Activated CD4-positive, alpha-beta T cell treated with anti-CD3 and anti-CD28 coated beads, Interleukin-2, amount 10 ng/mL, durations not matched to agents 7 days and 5 days (primary cell): ENCODE measurements at regions of chr10 and their contacts with region 1.

Region 1: GRCh38 chr10:114458955-114459354 is 54.7 kb upstream of the AFAP1L2 start:
- DNase-seq: no peak
- H3K4me3 Mint-ChIP-seq: no peak overlapping the region
- H3K27ac Mint-ChIP-seq: peak overlapping the region; percentile 42
- H3K4me1 Mint-ChIP-seq: peaks cover 5% of the 10 kb centered on the region
- H3K27me3 Mint-ChIP-seq: no peaks in the 10 kb centered on the region

Region 2: GRCh38 chr10:114304017-114304570 is 154.9 kb before region 1 on chr10:
- CTCF ChIA-PET with region 1: interaction called, 10 read pairs
- POLR2A ChIA-PET with region 1: no interaction called
- DNase-seq: peak; percentile 78
- H3K4me3 Mint-ChIP-seq: peak overlapping the region; percentile 77
- H3K27ac Mint-ChIP-seq: peak overlapping the region; percentile 70
- H3K4me1 Mint-ChIP-seq: peaks cover 12% of the 10 kb centered on the region
- H3K27me3 Mint-ChIP-seq: peaks cover 5% of the 10 kb centered on the region

Region 3: GRCh38 chr10:114470956-114471905 is 12.3 kb after region 1 on chr10:
- CTCF ChIA-PET with region 1: interaction called, 10 read pairs
- POLR2A ChIA-PET with region 1: no interaction called
- DNase-seq: peak; percentile 75
- H3K4me3 Mint-ChIP-seq: no peak overlapping the region
- H3K27ac Mint-ChIP-seq: peak overlapping the region; percentile 10
- H3K4me1 Mint-ChIP-seq: peaks cover 41% of the 10 kb centered on the region
- H3K27me3 Mint-ChIP-seq: no peaks in the 10 kb centered on the region

Region 4: DNA sequence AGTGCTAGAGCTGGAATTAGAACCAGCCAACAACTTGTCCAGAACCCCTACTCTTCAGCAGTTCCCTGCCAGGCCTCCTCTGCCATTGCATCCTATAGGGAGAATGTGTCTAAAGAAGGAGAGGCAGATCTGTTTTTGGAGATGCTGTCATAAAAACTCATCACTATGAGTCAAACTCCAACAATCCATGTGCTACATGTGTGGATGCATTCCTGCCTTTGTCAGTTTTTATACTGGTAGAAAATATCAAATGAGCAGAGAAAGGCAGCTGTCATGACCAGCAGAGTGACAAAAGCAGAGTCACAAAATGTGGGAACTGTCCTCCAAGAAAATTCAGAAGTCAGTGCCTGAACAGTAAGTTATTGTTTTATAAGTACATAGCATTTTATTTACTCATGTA is 106.1 kb after region 1 on chr10:
- CTCF ChIA-PET with region 1: no interaction called
- POLR2A ChIA-PET with region 1: no interaction called
- DNase-seq: no peak
- H3K4me3 Mint-ChIP-seq: no peak overlapping the region
- H3K27ac Mint-ChIP-seq: no peak overlapping the region
- H3K4me1 Mint-ChIP-seq: no peaks in the 10 kb centered on the region
- H3K27me3 Mint-ChIP-seq: peaks cover 2% of the 10 kb centered on the region